Activated CD4-positive, alpha-beta memory T cell treated with anti-CD3 and anti-CD28 coated beads for 36 hours (primary cell): ENCODE measurements at regions of chr4 and their contacts with region 1.

Region 1: DNA sequence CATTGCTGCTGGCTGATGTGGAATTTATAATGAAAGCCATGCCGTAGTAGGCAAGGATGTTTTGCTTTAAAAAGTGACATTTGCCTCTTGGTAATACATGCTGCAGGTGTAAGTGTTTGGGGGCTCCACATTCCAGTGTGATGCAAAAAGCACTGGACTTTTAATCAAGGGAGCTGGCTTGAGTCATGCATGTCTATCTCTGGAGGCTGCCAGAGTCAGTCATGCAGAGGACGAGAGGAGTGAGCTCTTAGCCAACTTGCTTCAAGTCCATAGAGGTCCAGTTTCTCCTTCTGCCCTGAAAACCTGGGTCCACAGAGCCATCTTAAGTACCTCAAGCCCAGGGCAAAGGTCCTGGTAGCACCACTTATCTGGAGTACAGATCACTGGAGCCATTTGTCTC is 11.6 kb upstream of the CXCL13 start:
- DNase-seq: no peak
- H3K4me3 Mint-ChIP-seq: no peak overlapping the region
- H3K27ac Mint-ChIP-seq: peak overlapping the region; percentile 29
- H3K4me1 Mint-ChIP-seq: peaks cover 50% of the 10 kb centered on the region
- H3K27me3 Mint-ChIP-seq: peaks cover 18% of the 10 kb centered on the region

Region 2: DNA sequence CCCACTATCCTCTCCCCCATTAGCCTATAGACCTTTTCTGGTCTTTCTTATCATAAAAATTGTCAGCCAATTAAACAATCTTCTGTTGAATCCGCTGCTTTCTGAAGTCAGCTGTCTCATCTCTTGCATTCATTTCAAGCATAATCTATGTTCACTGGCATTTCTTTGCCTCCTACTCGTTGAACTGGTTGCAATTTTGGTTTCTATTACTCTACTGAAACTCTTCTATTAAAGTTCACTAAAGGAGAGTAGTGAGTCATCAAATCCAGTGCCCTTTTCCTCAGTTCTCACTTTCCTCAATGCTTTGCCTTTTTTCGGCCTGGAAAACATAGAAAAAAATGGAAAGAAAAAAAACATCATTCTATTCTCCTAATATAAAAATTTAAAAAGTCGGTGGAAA is 12.3 kb before region 1 on chr4:
- CTCF ChIA-PET with region 1: interaction called, 55 read pairs
- POLR2A ChIA-PET with region 1: interaction called, 6 read pairs
- intact Hi-C with region 1: loop called (anchors 1 kb)
- DNase-seq: no peak
- H3K4me3 Mint-ChIP-seq: peak overlapping the region; percentile 7
- H3K27ac Mint-ChIP-seq: peak overlapping the region; percentile 65
- H3K4me1 Mint-ChIP-seq: peaks cover 35% of the 10 kb centered on the region
- H3K27me3 Mint-ChIP-seq: peaks cover 17% of the 10 kb centered on the region